GM12878 (cell line): ENCODE measurements at regions of chr13 and their contacts with region 1.

Region 1: DNA sequence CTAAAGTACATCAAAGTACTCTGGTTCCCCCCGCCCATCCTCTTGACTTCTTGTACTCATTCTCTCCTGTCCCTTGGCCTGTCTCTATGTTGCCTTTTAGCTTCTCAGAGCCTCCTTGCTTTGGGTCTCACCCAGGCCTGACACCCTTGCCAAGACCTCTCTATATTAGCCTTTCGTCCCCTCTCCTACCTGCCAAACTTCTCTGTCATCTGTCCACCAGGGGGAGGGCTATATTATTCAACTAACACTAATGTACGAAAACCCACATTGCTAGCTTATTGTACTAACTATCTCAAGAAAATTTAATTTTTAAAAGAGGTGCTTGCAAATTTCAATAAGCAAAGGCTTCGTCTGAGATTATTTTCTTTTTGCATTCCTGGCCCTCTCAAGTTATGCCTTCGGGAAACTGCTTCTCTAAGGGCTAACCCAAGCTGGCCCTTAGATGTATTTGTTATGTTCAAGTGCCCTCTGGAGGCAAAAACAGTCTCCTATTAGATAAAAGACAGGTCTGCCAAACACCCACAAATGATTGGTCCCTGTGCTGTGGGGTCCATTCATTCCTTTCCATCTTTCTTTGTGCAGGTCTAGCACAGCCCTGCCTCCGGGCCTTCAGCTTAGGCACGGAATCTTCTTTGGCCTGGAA is 6.3 kb upstream of the MRPS31 start:
- DNase-seq: no peak
- ATAC-seq: peak; percentile 95
- H3K4me3 ChIP-seq: no peak overlapping the region
- H3K27ac ChIP-seq: peak overlapping the region; percentile 17; the same call in 1 of the 2 replicates
- H3K4me1 ChIP-seq: peaks cover 11% of the 10 kb centered on the region
- H3K27me3 ChIP-seq: no peaks in the 10 kb centered on the region
- CTCF ChIP-seq: peak; percentile 53 to 60 (median 57)
- EP300 ChIP-seq: no peak
- POLR2A ChIP-seq: no peak
- RAD21 ChIP-seq: peak; percentile 73

Region 2: GRCh38 chr13:40002016-40002415 is 775.3 kb before region 1 on chr13:
- CTCF ChIA-PET with region 1: no interaction called
- POLR2A ChIA-PET with region 1: no interaction called
- RAD21 ChIA-PET with region 1: no interaction called
- SMC1A ChIA-PET with region 1: no interaction called
- in situ Hi-C with region 1: no loop called
- intact Hi-C with region 1: no loop called
- DNase-seq: no peak
- ATAC-seq: no peak
- H3K4me3 ChIP-seq: no peak overlapping the region
- H3K27ac ChIP-seq: no peak overlapping the region
- H3K4me1 ChIP-seq: no peaks in the 10 kb centered on the region
- H3K27me3 ChIP-seq: no peaks in the 10 kb centered on the region
- CTCF ChIP-seq: no peak
- EP300 ChIP-seq: no peak
- POLR2A ChIP-seq: no peak
- RAD21 ChIP-seq: no peak

Region 3: DNA sequence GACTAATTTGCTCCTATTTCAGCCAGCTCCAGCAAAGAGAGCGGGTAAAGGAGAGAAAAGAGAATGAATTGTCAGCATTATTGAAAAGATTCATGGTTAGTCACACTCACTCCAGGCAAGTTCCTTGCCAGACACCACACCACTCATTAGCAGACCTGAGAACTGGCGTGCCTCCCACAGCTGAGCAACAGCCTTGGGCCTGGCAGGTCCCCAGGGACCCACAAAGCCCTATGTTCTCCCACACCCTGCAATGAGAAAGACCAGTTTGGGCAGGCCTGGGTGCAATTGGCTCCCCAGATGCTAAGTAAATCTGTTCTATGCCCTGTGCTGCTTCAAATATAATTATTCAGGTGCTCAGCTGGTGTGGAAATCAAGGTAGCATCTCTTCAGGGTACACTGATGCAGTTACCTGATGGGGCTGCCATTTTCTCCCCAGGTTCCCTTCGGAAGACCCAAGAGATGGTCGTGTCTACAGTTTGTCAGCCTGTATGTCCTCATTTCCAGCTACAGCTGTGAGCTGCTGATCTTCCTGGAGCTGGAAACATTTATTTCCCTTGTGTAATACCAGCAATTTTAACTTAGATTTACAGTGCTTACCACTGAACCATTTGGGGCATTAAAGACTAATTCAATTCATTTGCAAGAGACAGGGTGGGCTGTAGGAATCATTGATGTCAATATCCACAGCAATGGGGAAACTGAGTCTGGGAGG is 716.8 kb before region 1 on chr13:
- CTCF ChIA-PET with region 1: interaction called, 7 read pairs
- POLR2A ChIA-PET with region 1: no interaction called
- RAD21 ChIA-PET with region 1: no interaction called
- SMC1A ChIA-PET with region 1: no interaction called
- in situ Hi-C with region 1: loop called (anchors 5 kb)
- intact Hi-C with region 1: loop called (anchors 5 kb)
- DNase-seq: peak; percentile 97
- ATAC-seq: peak; percentile 86
- H3K4me3 ChIP-seq: no peak overlapping the region
- H3K27ac ChIP-seq: peak overlapping the region; percentile 80
- H3K4me1 ChIP-seq: peaks cover 28% of the 10 kb centered on the region
- H3K27me3 ChIP-seq: no peaks in the 10 kb centered on the region
- CTCF ChIP-seq: no peak
- EP300 ChIP-seq: peak; percentile 65 to 79; a peak in 2 of 4 replicates
- POLR2A ChIP-seq: no peak
- RAD21 ChIP-seq: no peak

Region 4: GRCh38 chr13:40671956-40672764 is 105.1 kb before region 1 on chr13:
- CTCF ChIA-PET with region 1: interaction called, 32 read pairs
- POLR2A ChIA-PET with region 1: no interaction called
- RAD21 ChIA-PET with region 1: interaction called, 11 read pairs
- SMC1A ChIA-PET with region 1: interaction called, 15 read pairs
- in situ Hi-C with region 1: no loop called
- intact Hi-C with region 1: loop called (anchors 5 kb)
- DNase-seq: no peak
- ATAC-seq: no peak
- H3K4me3 ChIP-seq: no peak overlapping the region
- H3K27ac ChIP-seq: no peak overlapping the region
- H3K4me1 ChIP-seq: peaks cover 6% of the 10 kb centered on the region
- H3K27me3 ChIP-seq: no peaks in the 10 kb centered on the region
- CTCF ChIP-seq: no peak
- EP300 ChIP-seq: no peak
- POLR2A ChIP-seq: no peak
- RAD21 ChIP-seq: no peak

Region 5: GRCh38 chr13:40764587-40765403 is 12.5 kb before region 1 on chr13:
- CTCF ChIA-PET with region 1: interaction called, 36 read pairs
- POLR2A ChIA-PET with region 1: no interaction called
- RAD21 ChIA-PET with region 1: interaction called, 12 read pairs
- SMC1A ChIA-PET with region 1: interaction called, 15 read pairs
- in situ Hi-C with region 1: no loop called
- intact Hi-C with region 1: no loop called
- DNase-seq: no peak
- ATAC-seq: peak; percentile 73
- H3K4me3 ChIP-seq: 0 out of 2 replicates have a peak overlapping the region, but pooled peaks have one; percentile 2
- H3K27ac ChIP-seq: no peak overlapping the region
- H3K4me1 ChIP-seq: 0 out of 2 replicates have a peak, but pooled peaks cover 3% of the 10 kb centered on the region
- H3K27me3 ChIP-seq: no peaks in the 10 kb centered on the region
- CTCF ChIP-seq: no peak
- EP300 ChIP-seq: no peak
- POLR2A ChIP-seq: no peak
- RAD21 ChIP-seq: no peak

Region 6: DNA sequence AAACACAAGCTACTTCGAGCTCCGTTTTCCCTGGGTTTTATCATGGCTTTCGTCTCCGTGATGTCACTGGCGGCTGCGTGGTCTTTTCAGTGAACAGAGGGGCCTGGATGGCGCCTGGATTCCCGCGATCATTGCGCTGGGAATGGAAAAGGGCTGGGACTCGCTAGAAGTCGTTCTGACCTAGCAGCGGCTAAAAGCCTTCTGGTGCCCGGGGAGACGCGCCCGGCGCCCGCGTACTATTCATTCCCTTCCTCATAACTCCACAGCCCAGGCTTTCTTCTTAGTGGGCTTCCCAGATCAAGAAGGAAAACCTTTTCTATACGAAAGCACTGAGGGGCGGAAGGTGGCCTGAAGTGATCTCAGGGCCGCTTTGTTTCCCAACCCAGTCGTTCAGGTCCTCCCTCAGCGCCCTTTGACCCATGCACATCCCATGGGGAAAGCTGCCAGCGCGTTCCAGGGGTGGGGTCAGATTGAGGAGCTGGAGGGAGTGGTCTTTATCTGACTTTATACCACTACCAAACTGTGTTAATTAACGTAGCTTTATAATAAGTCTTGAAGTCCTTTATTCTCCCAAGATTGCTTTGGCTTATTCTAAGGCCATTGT is 145.3 kb after region 1 on chr13:
- CTCF ChIA-PET with region 1: interaction called, 15 read pairs
- POLR2A ChIA-PET with region 1: no interaction called
- RAD21 ChIA-PET with region 1: interaction called, 5 read pairs
- SMC1A ChIA-PET with region 1: interaction called, 3 read pairs
- in situ Hi-C with region 1: no loop called
- intact Hi-C with region 1: no loop called
- DNase-seq: no peak
- ATAC-seq: no peak
- H3K4me3 ChIP-seq: no peak overlapping the region
- H3K27ac ChIP-seq: no peak overlapping the region
- H3K4me1 ChIP-seq: no peaks in the 10 kb centered on the region
- H3K27me3 ChIP-seq: no peaks in the 10 kb centered on the region
- CTCF ChIP-seq: no peak
- EP300 ChIP-seq: no peak
- POLR2A ChIP-seq: no peak
- RAD21 ChIP-seq: no peak